Naive thymus-derived CD4-positive, alpha-beta T cell (primary cell): ENCODE measurements at regions of chr6 and their contacts with region 1.

Region 1: GRCh38 chr6:32118782-32119628 is 9.0 kb downstream of the ATF6B start:
- DNase-seq: peak; percentile 50 to 73 (median 62)
- ATAC-seq: peak; percentile 89
- H3K4me3 ChIP-seq: no peak overlapping the region
- H3K4me3 Mint-ChIP-seq: no peak overlapping the region
- H3K27ac ChIP-seq: no peak overlapping the region
- H3K27ac Mint-ChIP-seq: peak overlapping the region in 8 of 9 donors; percentile 10 to 81 (median 68)
- H3K4me1 ChIP-seq: no peaks in the 10 kb centered on the region
- H3K4me1 Mint-ChIP-seq: peaks cover 5 to 24% (median 18%) of the 10 kb centered on the region in 7 donors
- H3K27me3 ChIP-seq: no peaks in the 10 kb centered on the region
- H3K27me3 Mint-ChIP-seq: no peaks in the 10 kb centered on the region

Region 2: GRCh38 chr6:30116724-30117123 is 2002.3 kb before region 1 on chr6:
- CTCF ChIA-PET with region 1: no interaction called
- POLR2A ChIA-PET with region 1: interaction called, 10 read pairs
- intact Hi-C with region 1: no loop called
- DNase-seq: no peak
- ATAC-seq: no peak
- H3K4me3 ChIP-seq: no peak overlapping the region
- H3K4me3 Mint-ChIP-seq: no peak overlapping the region
- H3K27ac ChIP-seq: no peak overlapping the region
- H3K27ac Mint-ChIP-seq: no peak overlapping the region
- H3K4me1 ChIP-seq: no peaks in the 10 kb centered on the region
- H3K4me1 Mint-ChIP-seq: peaks cover 0 to 9% (median 0%) of the 10 kb centered on the region in 7 donors
- H3K27me3 ChIP-seq: peaks cover 0 to 5% of the 10 kb centered on the region in 2 donors
- H3K27me3 Mint-ChIP-seq: peaks cover 23 to 62% (median 37%) of the 10 kb centered on the region in 5 donors

Region 3: GRCh38 chr6:32058511-32058963 is 60.5 kb before region 1 on chr6:
- CTCF ChIA-PET with region 1: no interaction called
- POLR2A ChIA-PET with region 1: no interaction called
- intact Hi-C with region 1: no loop called
- DNase-seq: no peak
- ATAC-seq: no peak
- H3K4me3 ChIP-seq: no peak overlapping the region
- H3K4me3 Mint-ChIP-seq: no peak overlapping the region
- H3K27ac ChIP-seq: no peak overlapping the region
- H3K27ac Mint-ChIP-seq: no peak overlapping the region
- H3K4me1 ChIP-seq: no peaks in the 10 kb centered on the region
- H3K4me1 Mint-ChIP-seq: no peaks in the 10 kb centered on the region
- H3K27me3 ChIP-seq: no peaks in the 10 kb centered on the region
- H3K27me3 Mint-ChIP-seq: peaks cover 0 to 4% (median 0%) of the 10 kb centered on the region in 5 donors

Region 4: DNA sequence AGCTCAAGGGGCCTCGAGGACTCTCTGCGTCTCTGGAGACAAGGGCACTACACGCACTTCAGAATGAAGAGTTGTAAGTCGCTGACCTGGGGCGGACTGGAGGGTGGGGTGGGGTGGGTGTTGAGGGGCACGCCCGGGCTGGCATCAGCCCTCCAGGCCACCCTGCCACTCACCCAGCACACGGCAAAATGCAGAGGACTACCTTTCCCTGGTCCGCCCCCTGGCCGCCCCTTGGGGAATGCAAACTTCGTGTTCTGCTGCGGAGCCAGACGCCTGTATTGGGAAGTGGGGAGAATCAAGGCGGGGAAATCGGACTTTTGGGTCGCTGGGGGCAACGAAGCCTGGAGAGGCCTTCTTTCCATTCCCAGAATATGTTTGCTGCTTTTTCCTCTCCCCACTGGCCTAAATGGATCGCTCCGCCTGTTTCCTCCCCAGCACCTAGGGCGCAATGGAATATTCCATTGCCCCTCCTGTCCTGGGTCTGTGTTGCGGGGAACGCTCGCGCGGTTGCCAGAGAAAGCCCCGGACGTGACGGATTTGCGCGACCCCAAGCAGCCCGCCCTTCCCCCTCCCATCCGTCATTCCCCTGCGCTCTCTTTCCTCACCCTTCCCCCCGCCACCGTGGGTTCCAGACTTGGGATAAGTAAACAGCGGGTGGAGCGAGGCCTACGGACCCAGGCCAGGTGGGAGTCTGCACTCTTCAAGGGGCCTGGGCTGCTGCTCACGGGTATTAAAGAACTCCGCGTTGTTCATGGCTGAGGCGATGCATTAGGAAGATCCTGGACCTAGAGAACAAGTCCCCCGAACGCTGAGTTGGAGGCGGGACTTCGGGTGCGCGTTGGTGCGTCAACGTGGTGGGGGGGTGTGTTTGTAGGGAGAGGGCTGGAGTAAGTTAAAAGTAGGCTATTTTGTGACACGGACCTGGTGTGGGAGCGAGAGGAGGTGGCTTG is 34.8 kb after region 1 on chr6 and contains the start of gene PPT2:
- CTCF ChIA-PET with region 1: interaction called, 15 read pairs
- POLR2A ChIA-PET with region 1: no interaction called
- intact Hi-C with region 1: loop called (anchors 1 kb)
- DNase-seq: peak; percentile 34 to 85 (median 72)
- ATAC-seq: peak; percentile 82
- H3K4me3 ChIP-seq: peak within 1 kb of the TSS; percentile 68
- H3K4me3 Mint-ChIP-seq: peak within 1 kb of the TSS; percentile 87 to 100 (median 98)
- H3K27ac ChIP-seq: peak within 1 kb of the TSS; percentile 82
- H3K27ac Mint-ChIP-seq: peak within 1 kb of the TSS; percentile 87 to 98 (median 92)
- H3K4me1 ChIP-seq: peaks cover 10 to 35% of the 10 kb centered on the region in 2 donors
- H3K4me1 Mint-ChIP-seq: peaks cover 42 to 74% (median 65%) of the 10 kb centered on the region in 7 donors
- H3K27me3 ChIP-seq: no peaks in the 10 kb centered on the region
- H3K27me3 Mint-ChIP-seq: peaks cover 0 to 34% (median 12%) of the 10 kb centered on the region in 5 donors
- total RNA-seq, gene PPT2: 11.8 to 21.9 (median 15.8) TPM